ENCODE measurements at regions of chr17 and their contacts with region 1.

Region 1: GRCh38 chr17:1724506-1725362 is at the start of gene WDR81:
- DNase-seq: peak; percentile 68 to 94 (median 82)
- ATAC-seq: peak; percentile 75
- H3K4me3 ChIP-seq: peak within 1 kb of the TSS; percentile 60
- H3K4me3 Mint-ChIP-seq: peak within 1 kb of the TSS; percentile 86
- H3K27ac ChIP-seq: peak within 1 kb of the TSS; percentile 34 to 35
- H3K27ac Mint-ChIP-seq: peak within 1 kb of the TSS; percentile 85
- H3K4me1 ChIP-seq: peaks cover 85% of the 10 kb centered on the region
- H3K4me1 Mint-ChIP-seq: peaks cover 33% of the 10 kb centered on the region
- H3K27me3 ChIP-seq: no peaks in the 10 kb centered on the region
- H3K27me3 Mint-ChIP-seq: no peaks in the 10 kb centered on the region
- CTCF ChIP-seq: no peak
- total RNA-seq, gene WDR81: 24.8 to 25.0 TPM

Region 2: GRCh38 chr17:1752425-1753262 is 27.9 kb after region 1 on chr17:
- CTCF ChIA-PET with region 1: no interaction called
- POLR2A ChIA-PET with region 1: no interaction called
- intact Hi-C with region 1: no loop called
- DNase-seq: peak in 2 of 14 experiments; percentile 42 to 44
- ATAC-seq: no peak
- H3K4me3 ChIP-seq: no peak overlapping the region
- H3K4me3 Mint-ChIP-seq: no peak overlapping the region
- H3K27ac ChIP-seq: no peak overlapping the region
- H3K27ac Mint-ChIP-seq: no peak overlapping the region
- H3K4me1 ChIP-seq: peaks cover 9% of the 10 kb centered on the region
- H3K4me1 Mint-ChIP-seq: peaks cover 4% of the 10 kb centered on the region
- H3K27me3 ChIP-seq: no peaks in the 10 kb centered on the region
- H3K27me3 Mint-ChIP-seq: no peaks in the 10 kb centered on the region
- CTCF ChIP-seq: no peak

Region 3: DNA sequence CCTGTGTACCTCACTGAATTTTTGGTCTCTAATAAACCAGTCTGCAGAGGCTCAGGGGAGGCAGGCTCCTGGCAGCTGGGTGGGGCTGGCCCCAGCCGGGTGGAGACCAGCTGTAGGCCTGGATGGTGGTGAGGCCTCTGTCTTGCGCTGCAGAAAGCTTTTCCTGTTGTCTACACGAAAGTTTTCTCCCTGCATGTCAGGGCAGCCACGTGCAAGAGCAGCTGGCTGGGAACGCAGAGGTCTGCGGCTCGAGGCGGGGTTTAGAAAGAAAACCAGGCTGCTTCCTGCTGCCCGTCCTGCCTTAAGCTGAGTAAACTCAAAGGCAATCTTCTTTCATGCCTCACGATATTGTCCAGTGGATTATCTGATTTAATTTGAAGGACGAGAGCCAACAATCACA is 39.5 kb after region 1 on chr17:
- CTCF ChIA-PET with region 1: interaction called, 4 read pairs
- POLR2A ChIA-PET with region 1: interaction called, 34 read pairs
- intact Hi-C with region 1: loop called (anchors 1 to 5 kb)
- DNase-seq: peak; percentile 49 to 90 (median 68)
- ATAC-seq: peak; percentile 95
- H3K4me3 ChIP-seq: peak overlapping the region; percentile 7
- H3K4me3 Mint-ChIP-seq: peak overlapping the region; percentile 21
- H3K27ac ChIP-seq: peak overlapping the region; percentile 54 to 80
- H3K27ac Mint-ChIP-seq: peak overlapping the region; percentile 83
- H3K4me1 ChIP-seq: peaks cover 59% of the 10 kb centered on the region
- H3K4me1 Mint-ChIP-seq: peaks cover 49% of the 10 kb centered on the region
- H3K27me3 ChIP-seq: no peaks in the 10 kb centered on the region
- H3K27me3 Mint-ChIP-seq: no peaks in the 10 kb centered on the region
- CTCF ChIP-seq: no peak

Region 4: DNA sequence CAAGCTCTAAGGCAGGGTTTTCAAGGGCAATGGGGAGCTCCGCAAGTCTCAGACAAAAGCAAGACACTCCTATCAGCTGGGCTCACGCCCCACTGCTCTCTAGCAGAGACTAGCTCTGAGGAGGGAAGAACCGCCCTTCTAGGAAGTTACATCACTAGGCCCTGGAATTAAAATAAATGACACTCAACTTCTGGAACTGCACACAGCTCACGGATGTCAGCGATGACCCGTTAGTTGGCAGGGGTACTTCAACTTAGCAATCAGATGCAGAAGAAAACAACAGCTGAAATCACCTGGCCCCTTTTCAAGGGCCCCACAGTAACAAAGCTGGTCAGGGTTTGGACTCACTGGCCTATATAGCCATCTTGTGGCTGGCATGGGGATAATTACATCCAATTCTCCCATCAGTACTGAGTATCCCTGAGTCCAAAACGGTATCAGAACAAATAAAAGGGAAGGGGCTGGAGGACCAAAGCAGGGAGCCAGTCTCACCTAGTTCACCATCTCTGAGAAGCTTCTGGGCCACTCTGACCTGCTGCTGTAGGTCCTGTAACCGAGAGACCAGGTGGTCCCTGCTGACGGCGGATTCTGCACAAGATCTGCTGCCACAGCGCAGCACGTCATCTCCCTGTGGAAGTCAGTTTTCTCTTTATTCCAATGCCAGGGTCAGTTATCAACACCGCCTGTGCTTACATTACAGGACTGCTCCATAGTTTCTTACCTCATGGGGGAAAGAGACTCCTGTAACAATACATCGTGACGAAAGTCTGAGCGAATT is 59.3 kb after region 1 on chr17:
- CTCF ChIA-PET with region 1: interaction called, 11 read pairs
- POLR2A ChIA-PET with region 1: interaction called, 7 read pairs
- intact Hi-C with region 1: loop called (anchors 1 to 5 kb)
- DNase-seq: peak in 3 of 14 experiments; percentile 31 to 65 (median 54)
- ATAC-seq: peak; percentile 68
- H3K4me3 ChIP-seq: no peak overlapping the region
- H3K4me3 Mint-ChIP-seq: no peak overlapping the region
- H3K27ac ChIP-seq: no peak overlapping the region
- H3K27ac Mint-ChIP-seq: peak overlapping the region; percentile 76
- H3K4me1 ChIP-seq: peaks cover 10% of the 10 kb centered on the region
- H3K4me1 Mint-ChIP-seq: peaks cover 10% of the 10 kb centered on the region
- H3K27me3 ChIP-seq: no peaks in the 10 kb centered on the region
- H3K27me3 Mint-ChIP-seq: no peaks in the 10 kb centered on the region
- CTCF ChIP-seq: peak; percentile 53

Region 5: DNA sequence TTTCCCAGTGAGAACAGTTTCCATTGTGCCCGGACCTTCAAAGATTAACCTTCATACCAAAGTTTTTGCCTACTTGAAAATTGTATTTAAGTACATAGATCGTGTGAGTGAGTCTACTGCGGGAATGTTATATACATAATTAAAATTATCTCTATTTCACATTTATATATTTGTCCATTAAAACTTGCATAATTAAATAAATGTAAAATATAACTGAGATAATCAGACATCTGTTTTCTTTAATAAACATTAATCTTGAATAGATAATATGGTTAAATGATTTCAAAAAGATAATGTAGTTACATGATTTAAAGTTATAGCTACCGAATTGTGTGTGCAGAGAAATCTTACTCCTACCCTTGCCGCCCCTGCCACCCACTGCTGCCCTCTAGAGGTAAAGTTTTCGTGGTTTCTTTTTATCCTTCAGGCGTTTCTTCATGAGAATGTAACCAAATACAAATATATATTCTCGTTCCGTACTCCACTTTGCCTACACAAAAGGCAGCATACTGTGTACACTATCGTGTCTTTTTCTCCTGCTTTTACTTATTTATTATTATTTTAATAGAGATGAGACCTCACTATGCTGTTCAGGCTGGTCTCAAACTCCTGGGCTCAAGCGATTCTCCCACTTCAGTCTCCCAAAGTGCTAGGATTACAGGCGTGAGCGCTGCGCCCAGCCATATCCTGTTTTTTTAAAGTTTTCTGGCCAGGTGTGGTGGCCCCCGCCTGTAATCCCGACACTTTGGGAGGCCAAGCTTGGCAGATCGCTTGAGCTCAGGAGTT is 140.7 kb after region 1 on chr17:
- CTCF ChIA-PET with region 1: interaction called, 6 read pairs
- POLR2A ChIA-PET with region 1: no interaction called
- intact Hi-C with region 1: loop called (anchors 1 to 2 kb)
- DNase-seq: peak; percentile 20 to 80 (median 41)
- ATAC-seq: peak; percentile 70
- H3K4me3 ChIP-seq: no peak overlapping the region
- H3K4me3 Mint-ChIP-seq: no peak overlapping the region
- H3K27ac ChIP-seq: no peak overlapping the region
- H3K27ac Mint-ChIP-seq: no peak overlapping the region
- H3K4me1 ChIP-seq: peaks cover 15% of the 10 kb centered on the region
- H3K4me1 Mint-ChIP-seq: peaks cover 24% of the 10 kb centered on the region
- H3K27me3 ChIP-seq: no peaks in the 10 kb centered on the region
- H3K27me3 Mint-ChIP-seq: no peaks in the 10 kb centered on the region
- CTCF ChIP-seq: peak; percentile 81

Region 6: GRCh38 chr17:2282297-2282873 is 557.7 kb after region 1 on chr17:
- CTCF ChIA-PET with region 1: no interaction called
- POLR2A ChIA-PET with region 1: no interaction called
- intact Hi-C with region 1: loop called in 1 of 2 experiments (anchors 10 kb)
- DNase-seq: peak in 4 of 14 experiments; percentile 10 to 81 (median 76)
- ATAC-seq: peak; percentile 80
- H3K4me3 ChIP-seq: no peak overlapping the region
- H3K4me3 Mint-ChIP-seq: no peak overlapping the region
- H3K27ac ChIP-seq: no peak overlapping the region
- H3K27ac Mint-ChIP-seq: peak overlapping the region; percentile 58
- H3K4me1 ChIP-seq: peaks cover 14% of the 10 kb centered on the region
- H3K4me1 Mint-ChIP-seq: peaks cover 35% of the 10 kb centered on the region
- H3K27me3 ChIP-seq: no peaks in the 10 kb centered on the region
- H3K27me3 Mint-ChIP-seq: no peaks in the 10 kb centered on the region
- CTCF ChIP-seq: peak; percentile 78